Upper lobe of right lung (tissue), 1 donor: ENCODE measurements at regions of chr14 and their contacts with region 1.

Region 1: DNA sequence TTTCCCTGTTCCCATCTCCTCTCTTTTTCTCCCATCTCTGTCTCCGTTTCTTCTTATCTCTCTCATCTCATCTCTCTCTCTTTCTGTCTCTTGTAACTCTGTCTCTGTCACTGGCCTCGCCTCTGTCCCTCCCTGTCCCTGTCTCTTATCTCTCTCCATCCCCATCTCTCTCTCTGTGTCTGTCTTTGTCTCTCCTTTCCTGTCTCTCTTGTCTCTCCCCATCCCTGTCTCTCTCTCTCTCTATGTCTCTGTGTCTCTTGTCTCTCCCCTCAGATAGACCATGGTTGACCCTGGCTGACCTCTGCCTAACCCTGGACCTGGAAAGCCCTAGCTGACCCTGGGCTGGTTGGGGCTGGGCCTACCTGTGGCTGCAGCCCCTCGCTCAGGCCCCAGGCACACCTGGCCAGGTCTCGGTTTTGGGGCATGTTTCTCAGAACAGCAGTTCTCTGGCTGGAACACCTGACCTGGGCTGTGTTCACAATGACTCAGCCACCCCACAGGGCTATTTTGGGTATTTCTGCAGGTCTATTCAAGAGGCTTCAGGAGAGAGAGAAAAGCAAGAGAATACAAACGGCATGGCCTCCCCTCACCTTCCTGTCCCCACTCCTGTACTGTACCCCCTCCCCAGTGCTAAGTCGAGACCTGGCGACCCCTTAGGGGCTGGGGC is 174.4 kb downstream of the TMEM121 start:
- DNase-seq: peak; percentile 18
- ATAC-seq: no peak
- H3K4me3 ChIP-seq: no peak overlapping the region
- H3K27ac ChIP-seq: no peak overlapping the region
- H3K4me1 ChIP-seq: no peaks in the 10 kb centered on the region
- H3K27me3 ChIP-seq: no peaks in the 10 kb centered on the region
- CTCF ChIP-seq: no peak

Region 2: GRCh38 chr14:105439691-105440553 is 260.8 kb before region 1 on chr14:
- intact Hi-C with region 1: no loop called
- DNase-seq: no peak
- ATAC-seq: peak; percentile 28
- H3K4me3 ChIP-seq: no peak overlapping the region
- H3K27ac ChIP-seq: no peak overlapping the region
- H3K4me1 ChIP-seq: no peaks in the 10 kb centered on the region
- H3K27me3 ChIP-seq: no peaks in the 10 kb centered on the region
- CTCF ChIP-seq: peak; percentile 27

Region 3: GRCh38 chr14:105490572-105491366 is 210.0 kb before region 1 on chr14 and contains the start of gene TEDC1:
- intact Hi-C with region 1: no loop called
- DNase-seq: peak; percentile 100
- ATAC-seq: peak; percentile 86
- H3K4me3 ChIP-seq: peak within 1 kb of the TSS; percentile 77
- H3K27ac ChIP-seq: peak within 1 kb of the TSS; percentile 91
- H3K4me1 ChIP-seq: peaks cover 30% of the 10 kb centered on the region
- H3K27me3 ChIP-seq: no peaks in the 10 kb centered on the region
- CTCF ChIP-seq: peak; percentile 69
- total RNA-seq, gene TEDC1: 7.9 TPM

Region 4: GRCh38 chr14:105581551-105582341 is 119.0 kb before region 1 on chr14:
- intact Hi-C with region 1: loop called (anchors 10 kb)
- DNase-seq: peak; percentile 55
- ATAC-seq: no peak
- H3K4me3 ChIP-seq: no peak overlapping the region
- H3K27ac ChIP-seq: no peak overlapping the region
- H3K4me1 ChIP-seq: no peaks in the 10 kb centered on the region
- H3K27me3 ChIP-seq: no peaks in the 10 kb centered on the region
- CTCF ChIP-seq: no peak

Region 5: DNA sequence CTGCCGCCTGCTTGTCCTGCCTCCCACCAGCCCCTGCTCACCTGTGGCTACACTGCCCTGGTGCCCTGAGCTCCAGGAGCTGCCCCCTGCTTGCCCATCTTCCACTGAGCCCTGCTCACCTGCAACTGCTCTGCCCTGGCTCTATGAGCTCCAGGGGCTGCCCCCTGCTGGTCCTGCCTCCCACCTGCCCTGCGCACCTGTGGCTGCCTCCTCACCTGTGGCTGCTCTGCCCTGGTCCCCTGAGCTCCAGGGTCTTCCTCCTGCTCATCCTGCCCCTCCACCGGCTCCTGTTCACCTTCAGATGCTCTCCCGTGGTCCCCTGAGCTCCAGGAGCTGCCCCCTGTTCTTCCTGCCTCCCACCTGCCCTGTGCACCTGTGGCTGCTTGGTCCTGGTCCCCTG is 73.2 kb after region 1 on chr14:
- intact Hi-C with region 1: no loop called
- DNase-seq: peak; percentile 54
- ATAC-seq: no peak
- H3K4me3 ChIP-seq: no peak overlapping the region
- H3K27ac ChIP-seq: no peak overlapping the region
- H3K4me1 ChIP-seq: no peaks in the 10 kb centered on the region
- H3K27me3 ChIP-seq: no peaks in the 10 kb centered on the region
- CTCF ChIP-seq: no peak